GM10248 (cell line): ENCODE measurements at regions of chr21 and their contacts with region 1.

Region 1: GRCh38 chr21:29164325-29164942 is 34.0 kb downstream of the MAP3K7CL start:
- DNase-seq: peak; percentile 30
- CTCF ChIP-seq: peak; percentile 27

Region 2: DNA sequence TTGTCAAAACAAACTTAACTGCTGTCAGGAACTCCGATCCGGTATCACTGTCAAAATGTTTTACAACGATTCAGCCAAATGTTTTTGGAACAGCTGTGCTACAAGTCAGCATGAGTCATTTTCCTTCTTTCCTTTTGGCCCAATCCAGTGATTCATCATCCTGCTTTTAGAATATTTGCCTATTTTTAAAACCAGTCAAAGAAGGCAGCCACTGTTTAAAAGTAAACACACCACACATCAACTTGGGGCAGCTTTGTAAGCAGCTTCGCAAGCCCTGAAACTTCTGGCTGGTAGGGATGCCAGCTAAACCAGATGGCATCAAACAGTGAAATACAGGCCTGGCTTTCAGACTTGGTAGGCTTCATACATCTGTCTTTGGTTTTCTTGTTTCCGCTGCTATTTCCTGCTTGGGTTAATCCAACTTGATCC is 19.1 kb before region 1 on chr21:
- CTCF ChIA-PET with region 1: interaction called, 12 read pairs
- POLR2A ChIA-PET with region 1: no interaction called
- DNase-seq: no peak
- CTCF ChIP-seq: no peak

Region 3: GRCh38 chr21:29174607-29175013 is 10.2 kb after region 1 on chr21:
- CTCF ChIA-PET with region 1: interaction called, 12 read pairs
- POLR2A ChIA-PET with region 1: no interaction called
- DNase-seq: no peak
- CTCF ChIP-seq: no peak

Region 4: DNA sequence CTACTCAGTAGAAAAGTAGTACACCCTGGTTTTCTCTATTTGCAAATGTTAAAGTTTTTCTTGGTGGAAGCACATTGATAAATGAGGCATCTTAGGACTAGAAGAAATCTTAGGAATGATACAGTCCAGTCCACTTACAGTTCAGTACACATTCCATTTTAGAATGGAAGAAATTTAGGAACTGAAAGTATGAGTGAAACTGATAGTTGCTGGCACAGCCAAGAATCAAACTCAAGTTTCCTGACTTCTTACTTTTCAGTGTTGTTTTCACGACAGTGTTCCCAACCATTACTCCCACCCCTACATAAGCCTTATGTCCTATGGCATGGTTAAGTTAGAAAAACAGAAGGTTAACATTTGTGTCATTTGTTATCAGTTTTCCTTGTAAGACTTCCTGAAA is 392.8 kb after region 1 on chr21:
- CTCF ChIA-PET with region 1: no interaction called
- POLR2A ChIA-PET with region 1: no interaction called
- DNase-seq: no peak
- CTCF ChIP-seq: no peak